HCT116 (cell line): ENCODE measurements at regions of chr3 and their contacts with region 1.

Region 1: GRCh38 chr3:66518126-66518525 is 17.3 kb upstream of the LRIG1 start:
- DNase-seq: no peak
- ATAC-seq: no peak
- H3K4me3 ChIP-seq: no peak overlapping the region
- H3K27ac ChIP-seq: no peak overlapping the region
- H3K4me1 ChIP-seq: no peaks in the 10 kb centered on the region
- H3K27me3 ChIP-seq: peaks cover 10% of the 10 kb centered on the region
- CTCF ChIP-seq: no peak
- POLR2A ChIP-seq: no peak
- RAD21 ChIP-seq: no peak

Region 2: GRCh38 chr3:66450390-66451022 is 67.6 kb before region 1 on chr3:
- CTCF ChIA-PET with region 1: no interaction called
- POLR2A ChIA-PET with region 1: no interaction called
- RAD21 ChIA-PET with region 1: no interaction called
- intact Hi-C with region 1: loop called (anchors 10 kb)
- DNase-seq: no peak
- ATAC-seq: no peak
- H3K4me3 ChIP-seq: no peak overlapping the region
- H3K27ac ChIP-seq: no peak overlapping the region
- H3K4me1 ChIP-seq: no peaks in the 10 kb centered on the region
- H3K27me3 ChIP-seq: no peaks in the 10 kb centered on the region
- CTCF ChIP-seq: no peak
- POLR2A ChIP-seq: no peak
- RAD21 ChIP-seq: no peak

Region 3: GRCh38 chr3:66957367-66957766 is 439.2 kb after region 1 on chr3:
- CTCF ChIA-PET with region 1: no interaction called
- POLR2A ChIA-PET with region 1: no interaction called
- RAD21 ChIA-PET with region 1: no interaction called
- intact Hi-C with region 1: no loop called
- DNase-seq: no peak
- ATAC-seq: no peak
- H3K4me3 ChIP-seq: no peak overlapping the region
- H3K27ac ChIP-seq: no peak overlapping the region
- H3K4me1 ChIP-seq: no peaks in the 10 kb centered on the region
- H3K27me3 ChIP-seq: peaks cover 80% of the 10 kb centered on the region
- CTCF ChIP-seq: no peak
- POLR2A ChIP-seq: no peak
- RAD21 ChIP-seq: no peak